Naive thymus-derived CD4-positive, alpha-beta T cell (primary cell): ENCODE measurements at regions of chr17 and their contacts with region 1.

Region 1: GRCh38 chr17:30104575-30105339 is 11.9 kb upstream of the NSRP1 start:
- DNase-seq: peak; percentile 35 to 67 (median 58)
- ATAC-seq: peak; percentile 98
- H3K4me3 ChIP-seq: peak overlapping the region; percentile 40
- H3K4me3 Mint-ChIP-seq: peak overlapping the region; percentile 74 to 91 (median 84)
- H3K27ac ChIP-seq: no peak overlapping the region
- H3K27ac Mint-ChIP-seq: peak overlapping the region in 5 of 9 donors; percentile 16 to 73 (median 34)
- H3K4me1 ChIP-seq: peaks cover 0 to 7% of the 10 kb centered on the region in 2 donors
- H3K4me1 Mint-ChIP-seq: peaks cover 5 to 7% (median 6%) of the 10 kb centered on the region in 7 donors
- H3K27me3 ChIP-seq: no peaks in the 10 kb centered on the region
- H3K27me3 Mint-ChIP-seq: peaks cover 0 to 29% (median 5%) of the 10 kb centered on the region in 5 donors

Region 2: GRCh38 chr17:29962656-29963055 is 142.1 kb before region 1 on chr17:
- CTCF ChIA-PET with region 1: no interaction called
- POLR2A ChIA-PET with region 1: no interaction called
- intact Hi-C with region 1: no loop called
- DNase-seq: no peak
- ATAC-seq: no peak
- H3K4me3 ChIP-seq: no peak overlapping the region
- H3K4me3 Mint-ChIP-seq: no peak overlapping the region
- H3K27ac ChIP-seq: no peak overlapping the region
- H3K27ac Mint-ChIP-seq: no peak overlapping the region
- H3K4me1 ChIP-seq: no peaks in the 10 kb centered on the region
- H3K4me1 Mint-ChIP-seq: no peaks in the 10 kb centered on the region
- H3K27me3 ChIP-seq: no peaks in the 10 kb centered on the region
- H3K27me3 Mint-ChIP-seq: peaks cover 0 to 16% (median 0%) of the 10 kb centered on the region in 5 donors

Region 3: GRCh38 chr17:30093463-30094147 is 11.2 kb before region 1 on chr17:
- CTCF ChIA-PET with region 1: interaction called, 27 read pairs
- POLR2A ChIA-PET with region 1: no interaction called
- intact Hi-C with region 1: no loop called
- DNase-seq: peak; percentile 13 to 71 (median 40)
- ATAC-seq: peak; percentile 78
- H3K4me3 ChIP-seq: no peak overlapping the region
- H3K4me3 Mint-ChIP-seq: peak overlapping the region in 1 of 10 donors; percentile 11
- H3K27ac ChIP-seq: no peak overlapping the region
- H3K27ac Mint-ChIP-seq: no peak overlapping the region
- H3K4me1 ChIP-seq: no peaks in the 10 kb centered on the region
- H3K4me1 Mint-ChIP-seq: peaks cover 0 to 8% (median 5%) of the 10 kb centered on the region in 7 donors
- H3K27me3 ChIP-seq: no peaks in the 10 kb centered on the region
- H3K27me3 Mint-ChIP-seq: peaks cover 21 to 56% (median 33%) of the 10 kb centered on the region in 5 donors

Region 4: GRCh38 chr17:30124273-30124796 is 19.6 kb after region 1 on chr17:
- CTCF ChIA-PET with region 1: interaction called, 25 read pairs
- POLR2A ChIA-PET with region 1: no interaction called
- intact Hi-C with region 1: loop called in 1 of 2 experiments (anchors 1 kb)
- DNase-seq: no peak
- ATAC-seq: no peak
- H3K4me3 ChIP-seq: no peak overlapping the region
- H3K4me3 Mint-ChIP-seq: no peak overlapping the region
- H3K27ac ChIP-seq: no peak overlapping the region
- H3K27ac Mint-ChIP-seq: peak overlapping the region in 5 of 9 donors; percentile 33 to 68 (median 51)
- H3K4me1 ChIP-seq: no peaks in the 10 kb centered on the region
- H3K4me1 Mint-ChIP-seq: peaks cover 22 to 54% (median 42%) of the 10 kb centered on the region in 7 donors
- H3K27me3 ChIP-seq: no peaks in the 10 kb centered on the region
- H3K27me3 Mint-ChIP-seq: no peaks in the 10 kb centered on the region

Region 5: GRCh38 chr17:30278032-30278431 is 173.3 kb after region 1 on chr17:
- CTCF ChIA-PET with region 1: interaction called, 4 read pairs
- POLR2A ChIA-PET with region 1: no interaction called
- intact Hi-C with region 1: loop called in 1 of 2 experiments (anchors 1 kb)
- DNase-seq: peak in 1 of 9 donors; percentile 6
- ATAC-seq: no peak
- H3K4me3 ChIP-seq: no peak overlapping the region
- H3K4me3 Mint-ChIP-seq: no peak overlapping the region
- H3K27ac ChIP-seq: no peak overlapping the region
- H3K27ac Mint-ChIP-seq: peak overlapping the region in 2 of 9 donors; percentile 2 to 32
- H3K4me1 ChIP-seq: no peaks in the 10 kb centered on the region
- H3K4me1 Mint-ChIP-seq: peaks cover 0 to 6% (median 0%) of the 10 kb centered on the region in 7 donors
- H3K27me3 ChIP-seq: no peaks in the 10 kb centered on the region
- H3K27me3 Mint-ChIP-seq: no peaks in the 10 kb centered on the region